CD8-positive, alpha-beta T cell (primary cell): ENCODE measurements at regions of chr15 and their contacts with region 1.

Region 1: GRCh38 chr15:48177766-48178647 is at the start of gene MYEF2:
- DNase-seq: peak; percentile 39 to 81 (median 63)
- ATAC-seq: peak; percentile 76
- H3K4me3 ChIP-seq: peak within 1 kb of the TSS; percentile 47 to 49
- H3K4me3 Mint-ChIP-seq: peak within 1 kb of the TSS; percentile 85
- H3K27ac ChIP-seq: peak within 1 kb of the TSS; percentile 14 to 53
- H3K27ac Mint-ChIP-seq: peak within 1 kb of the TSS; percentile 73
- H3K4me1 ChIP-seq: no peaks in the 10 kb centered on the region
- H3K4me1 Mint-ChIP-seq: peaks cover 25% of the 10 kb centered on the region
- H3K27me3 ChIP-seq: no peaks in the 10 kb centered on the region
- H3K27me3 Mint-ChIP-seq: peaks cover 10% of the 10 kb centered on the region
- CTCF ChIP-seq: no peak
- total RNA-seq, gene MYEF2: 23.2 to 29.3 TPM

Region 2: GRCh38 chr15:47708161-47708980 is 469.6 kb before region 1 on chr15:
- CTCF ChIA-PET with region 1: no interaction called
- POLR2A ChIA-PET with region 1: no interaction called
- intact Hi-C with region 1: no loop called
- DNase-seq: no peak
- ATAC-seq: no peak
- H3K4me3 ChIP-seq: no peak overlapping the region
- H3K4me3 Mint-ChIP-seq: no peak overlapping the region
- H3K27ac ChIP-seq: no peak overlapping the region
- H3K27ac Mint-ChIP-seq: no peak overlapping the region
- H3K4me1 ChIP-seq: no peaks in the 10 kb centered on the region
- H3K4me1 Mint-ChIP-seq: no peaks in the 10 kb centered on the region
- H3K27me3 ChIP-seq: no peaks in the 10 kb centered on the region
- H3K27me3 Mint-ChIP-seq: no peaks in the 10 kb centered on the region
- CTCF ChIP-seq: no peak

Region 3: DNA sequence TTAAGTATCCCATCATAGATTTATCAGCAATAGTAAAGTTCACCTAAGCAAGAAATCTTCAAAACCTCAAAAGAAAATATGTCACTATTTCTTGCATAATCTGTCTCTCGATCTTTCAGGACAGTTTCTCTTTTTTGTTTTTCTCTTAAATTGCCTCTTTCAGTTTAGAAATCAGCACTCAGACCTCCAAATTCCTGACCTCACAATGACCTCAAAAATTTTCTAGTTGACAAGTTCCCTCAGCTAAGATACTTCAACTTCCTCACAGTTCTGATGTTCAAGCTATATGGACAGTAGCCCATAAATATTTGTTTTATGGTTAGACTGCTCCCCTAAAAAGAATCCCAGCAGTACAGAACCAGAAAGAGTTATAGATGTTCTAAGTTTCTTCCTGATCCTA is 33.1 kb before region 1 on chr15:
- CTCF ChIA-PET with region 1: no interaction called
- POLR2A ChIA-PET with region 1: no interaction called
- intact Hi-C with region 1: no loop called
- DNase-seq: no peak
- ATAC-seq: no peak
- H3K4me3 ChIP-seq: no peak overlapping the region
- H3K4me3 Mint-ChIP-seq: no peak overlapping the region
- H3K27ac ChIP-seq: no peak overlapping the region
- H3K27ac Mint-ChIP-seq: no peak overlapping the region
- H3K4me1 ChIP-seq: no peaks in the 10 kb centered on the region
- H3K4me1 Mint-ChIP-seq: no peaks in the 10 kb centered on the region
- H3K27me3 ChIP-seq: no peaks in the 10 kb centered on the region
- H3K27me3 Mint-ChIP-seq: no peaks in the 10 kb centered on the region
- CTCF ChIP-seq: no peak

Region 4: GRCh38 chr15:48190932-48191573 is 13.0 kb after region 1 on chr15:
- CTCF ChIA-PET with region 1: no interaction called
- POLR2A ChIA-PET with region 1: no interaction called
- intact Hi-C with region 1: loop called in 1 of 2 experiments (anchors 1 kb)
- DNase-seq: peak in 6 of 9 experiments; percentile 3 to 44 (median 24)
- ATAC-seq: no peak
- H3K4me3 ChIP-seq: no peak overlapping the region
- H3K4me3 Mint-ChIP-seq: no peak overlapping the region
- H3K27ac ChIP-seq: no peak overlapping the region
- H3K27ac Mint-ChIP-seq: no peak overlapping the region
- H3K4me1 ChIP-seq: no peaks in the 10 kb centered on the region
- H3K4me1 Mint-ChIP-seq: peaks cover 2% of the 10 kb centered on the region
- H3K27me3 ChIP-seq: no peaks in the 10 kb centered on the region
- H3K27me3 Mint-ChIP-seq: peaks cover 30% of the 10 kb centered on the region
- CTCF ChIP-seq: no peak